ENCODE measurements at regions of chr11 and their contacts with region 1.

Region 1: GRCh38 chr11:12888525-12889158 is 120.5 kb upstream of the RASSF10 start:
- DNase-seq: peak; percentile 71 to 90 (median 75)
- ATAC-seq: peak; percentile 96
- H3K4me3 ChIP-seq: no peak overlapping the region
- H3K27ac ChIP-seq: no peak overlapping the region
- H3K4me1 ChIP-seq: peaks cover 0 to 5% of the 10 kb centered on the region in 2 experiments; a peak in 4 of 5 replicates
- H3K27me3 ChIP-seq: no peaks in the 10 kb centered on the region
- CTCF ChIP-seq: peak; percentile 82 to 88 (median 86)
- EP300 ChIP-seq: no peak
- POLR2A ChIP-seq: no peak
- RAD21 ChIP-seq: peak; percentile 93 to 95

Region 2: DNA sequence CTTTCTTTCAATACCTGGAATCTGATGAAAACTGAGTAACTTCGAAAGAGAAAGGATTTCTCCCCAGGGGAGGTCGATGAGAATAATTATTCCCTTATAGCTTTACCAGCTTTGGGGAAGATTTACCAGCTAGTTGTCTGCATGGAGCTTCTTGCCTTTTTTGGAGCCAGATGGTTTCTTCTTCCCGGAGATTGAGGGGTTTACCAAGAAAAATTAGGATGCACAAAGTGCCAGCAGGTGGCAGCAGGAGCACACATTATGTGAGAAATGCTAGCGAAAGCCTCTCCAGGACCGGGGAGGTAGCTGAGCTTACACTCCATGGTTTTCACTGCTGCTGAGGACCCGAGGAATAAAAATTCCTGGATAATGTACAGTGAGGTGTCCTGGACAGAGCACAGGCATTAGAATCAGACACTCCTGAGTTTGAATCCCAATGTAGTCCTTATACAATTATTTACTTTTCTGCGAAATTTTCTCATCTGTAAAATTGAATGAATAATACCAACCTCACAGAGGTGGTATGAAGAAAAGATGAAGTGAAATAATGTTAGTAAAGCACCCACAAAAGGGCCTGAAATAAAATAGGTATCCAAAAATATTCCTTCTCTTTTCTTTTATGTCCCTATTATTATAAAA is 557.3 kb before region 1 on chr11:
- CTCF ChIA-PET with region 1: interaction called, 15 read pairs
- POLR2A ChIA-PET with region 1: no interaction called
- in situ Hi-C with region 1: no loop called
- intact Hi-C with region 1: no loop called
- DNase-seq: peak; percentile 58 to 87 (median 66)
- ATAC-seq: peak; percentile 89
- H3K4me3 ChIP-seq: no peak overlapping the region
- H3K27ac ChIP-seq: no peak overlapping the region
- H3K4me1 ChIP-seq: no peaks in the 10 kb centered on the region; a peak in 1 of 5 replicates
- H3K27me3 ChIP-seq: no peaks in the 10 kb centered on the region; a peak in 1 of 5 replicates
- CTCF ChIP-seq: peak; percentile 74 to 90 (median 77)
- EP300 ChIP-seq: no peak
- POLR2A ChIP-seq: no peak
- RAD21 ChIP-seq: peak; percentile 89 to 91

Region 3: GRCh38 chr11:12581923-12582322 is 306.7 kb before region 1 on chr11:
- CTCF ChIA-PET with region 1: no interaction called
- POLR2A ChIA-PET with region 1: no interaction called
- in situ Hi-C with region 1: no loop called
- intact Hi-C with region 1: loop called (anchors 5 kb)
- DNase-seq: peak in 3 of 4 experiments; percentile 23 to 69 (median 41)
- ATAC-seq: peak; percentile 73
- H3K4me3 ChIP-seq: no peak overlapping the region
- H3K27ac ChIP-seq: no peak overlapping the region
- H3K4me1 ChIP-seq: peaks cover 11 to 22% of the 10 kb centered on the region in 2 experiments; a peak in 4 of 5 replicates
- H3K27me3 ChIP-seq: no peaks in the 10 kb centered on the region
- CTCF ChIP-seq: no peak
- EP300 ChIP-seq: no peak
- POLR2A ChIP-seq: no peak
- RAD21 ChIP-seq: no peak

Region 4: GRCh38 chr11:12673924-12674570 is 214.6 kb before region 1 on chr11 and contains the start of gene TEAD1:
- CTCF ChIA-PET with region 1: no interaction called
- POLR2A ChIA-PET with region 1: no interaction called
- in situ Hi-C with region 1: no loop called
- intact Hi-C with region 1: loop called (anchors 5 kb)
- DNase-seq: peak; percentile 94 to 99 (median 98)
- ATAC-seq: peak; percentile 95
- H3K4me3 ChIP-seq: peak within 1 kb of the TSS; percentile 74
- H3K27ac ChIP-seq: peak within 1 kb of the TSS; percentile 86
- H3K4me1 ChIP-seq: peaks cover 5 to 12% of the 10 kb centered on the region in 2 experiments; a peak in 3 of 5 replicates
- H3K27me3 ChIP-seq: no peaks in the 10 kb centered on the region
- CTCF ChIP-seq: no peak; a peak in 1 of 6 replicates
- EP300 ChIP-seq: no peak; the same call in 1 of the 2 replicates
- POLR2A ChIP-seq: peak; percentile 79
- RAD21 ChIP-seq: no peak; a peak in 1 of 4 replicates
- polyA plus RNA-seq, gene TEAD1: 1.7 to 2.1 TPM

Region 5: DNA sequence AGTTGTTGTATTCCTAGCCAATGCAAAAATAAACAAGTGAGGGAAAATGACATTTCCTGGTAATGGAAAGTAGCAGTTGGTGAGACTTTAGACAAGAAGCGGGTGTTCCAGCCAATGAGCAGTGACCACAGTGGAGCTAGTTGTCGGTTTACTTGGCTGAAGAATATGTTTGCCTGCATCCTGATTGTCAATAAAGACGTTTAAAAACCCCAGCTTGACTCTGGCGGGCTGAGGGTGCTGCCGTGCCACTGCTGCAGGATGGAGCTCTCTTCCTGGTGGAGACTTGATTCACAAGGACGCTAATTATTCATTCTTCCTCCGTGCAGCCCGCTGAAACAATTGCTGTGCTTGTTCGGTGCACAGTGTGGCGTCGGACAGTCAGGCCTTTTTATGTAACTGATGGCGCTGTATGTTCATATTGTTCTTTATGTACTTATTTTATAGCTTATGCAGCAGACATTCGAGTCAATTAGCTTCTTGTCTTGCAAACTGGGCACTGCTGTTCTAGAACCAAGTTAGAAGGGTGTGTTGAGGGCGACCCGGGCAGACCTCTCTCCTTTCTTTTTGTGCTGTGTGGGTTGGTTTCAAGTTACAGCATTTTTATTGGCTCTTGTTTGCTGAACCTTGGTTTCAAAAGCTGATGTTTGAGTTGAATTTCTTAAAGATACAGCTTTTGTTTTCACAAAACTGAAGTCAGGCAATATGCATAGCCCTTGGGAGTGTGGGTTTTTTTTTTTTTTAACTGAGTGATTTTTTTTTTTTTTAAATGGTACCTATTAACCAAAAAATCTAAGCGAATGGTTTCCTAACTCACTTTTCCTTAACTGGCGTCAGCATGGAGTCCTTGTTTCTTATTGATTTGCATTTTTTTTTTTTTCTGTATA is 60.5 kb before region 1 on chr11:
- CTCF ChIA-PET with region 1: no interaction called
- POLR2A ChIA-PET with region 1: no interaction called
- in situ Hi-C with region 1: no loop called
- intact Hi-C with region 1: loop called (anchors 5 kb)
- DNase-seq: peak in 2 of 4 experiments; percentile 67 to 68
- ATAC-seq: peak; percentile 87
- H3K4me3 ChIP-seq: peak overlapping the region; percentile 18
- H3K27ac ChIP-seq: peak overlapping the region; percentile 57
- H3K4me1 ChIP-seq: peaks cover 9 to 35% of the 10 kb centered on the region in 2 experiments; a peak in 4 of 5 replicates
- H3K27me3 ChIP-seq: no peaks in the 10 kb centered on the region
- CTCF ChIP-seq: peak in 2 of 3 experiments; percentile 15 to 18; a peak in 3 of 6 replicates
- EP300 ChIP-seq: no peak
- POLR2A ChIP-seq: 0 out of 2 replicates have a peak, but pooled peaks have one; percentile 34
- RAD21 ChIP-seq: peak; percentile 23 to 26; a peak in 3 of 4 replicates

Region 6: GRCh38 chr11:12841946-12842630 is 46.6 kb before region 1 on chr11:
- CTCF ChIA-PET with region 1: no interaction called
- POLR2A ChIA-PET with region 1: no interaction called
- in situ Hi-C with region 1: no loop called
- intact Hi-C with region 1: no loop called
- DNase-seq: peak in 3 of 4 experiments; percentile 32 to 75 (median 43)
- ATAC-seq: peak; percentile 55
- H3K4me3 ChIP-seq: no peak overlapping the region
- H3K27ac ChIP-seq: peak overlapping the region; percentile 76; the same call in 2 of the 3 replicates
- H3K4me1 ChIP-seq: peaks cover 10 to 63% of the 10 kb centered on the region in 2 experiments; a peak in 4 of 5 replicates
- H3K27me3 ChIP-seq: no peaks in the 10 kb centered on the region
- CTCF ChIP-seq: no peak
- EP300 ChIP-seq: 0 out of 2 replicates have a peak, but pooled peaks have one; percentile 32
- POLR2A ChIP-seq: no peak
- RAD21 ChIP-seq: 0 out of 4 replicates have a peak, but pooled peaks of 1 of the 2 experiments have one; percentile 8

Region 7: DNA sequence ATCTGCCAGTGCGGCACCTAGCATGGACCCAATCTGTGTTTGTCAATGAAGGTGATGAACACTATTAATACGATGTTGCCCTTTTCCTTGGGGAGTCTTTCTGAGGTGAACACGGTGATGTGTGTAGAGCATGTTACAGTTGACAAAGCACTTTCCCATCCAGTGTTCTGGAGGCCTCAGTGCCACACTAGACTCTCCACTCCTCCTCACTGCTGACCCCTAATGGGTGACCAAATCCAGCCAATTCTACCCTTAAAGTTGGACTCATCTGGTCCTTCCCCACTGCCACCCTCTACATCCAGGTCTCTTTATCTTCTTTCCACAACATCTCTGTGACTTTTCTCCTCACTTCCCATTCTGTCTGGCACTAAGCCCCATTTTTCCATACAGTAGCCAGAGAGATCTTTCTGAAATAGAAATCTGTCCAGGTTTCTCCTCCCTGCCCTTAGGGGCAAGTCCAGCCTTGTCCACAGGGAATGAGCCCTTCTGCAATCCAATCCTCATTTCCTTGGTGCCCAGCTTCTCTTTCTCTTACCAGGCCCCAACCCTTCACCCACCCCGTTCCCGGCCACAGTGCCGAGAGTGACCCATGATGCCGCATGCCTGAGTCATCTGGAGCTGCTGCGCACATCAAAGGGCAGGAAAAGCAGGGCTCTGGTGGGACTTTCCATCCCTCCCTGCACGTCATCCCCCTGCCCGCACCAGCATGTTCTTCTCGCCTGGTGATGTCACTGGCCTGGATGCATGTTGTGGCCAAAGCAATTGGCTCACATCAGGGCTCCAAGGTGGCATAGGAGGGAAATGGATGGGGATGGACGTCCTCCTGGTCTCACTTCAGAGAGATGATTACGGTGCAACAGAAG is 184.7 kb after region 1 on chr11:
- CTCF ChIA-PET with region 1: no interaction called
- POLR2A ChIA-PET with region 1: no interaction called
- in situ Hi-C with region 1: no loop called
- intact Hi-C with region 1: no loop called
- DNase-seq: no peak
- ATAC-seq: peak; percentile 45; the same call in 2 of the 3 replicates
- H3K4me3 ChIP-seq: no peak overlapping the region
- H3K27ac ChIP-seq: no peak overlapping the region
- H3K4me1 ChIP-seq: peaks cover 0 to 4% of the 10 kb centered on the region in 2 experiments; a peak in 2 of 5 replicates
- H3K27me3 ChIP-seq: peaks cover 2 to 16% of the 10 kb centered on the region in 2 experiments; a peak in 1 of 5 replicates
- CTCF ChIP-seq: peak in 1 of 3 experiments; percentile 20; a peak in 1 of 6 replicates
- EP300 ChIP-seq: no peak
- POLR2A ChIP-seq: no peak
- RAD21 ChIP-seq: no peak; a peak in 1 of 4 replicates

Measured in K562 (cell line).